Sigmoid colon (tissue), 7 donors: ENCODE measurements at regions of chr3 and their contacts with region 1.

Region 1: GRCh38 chr3:192409825-192410683 is 317.3 kb downstream of the FGF12 start:
- DNase-seq: no peak
- H3K4me3 ChIP-seq: peak overlapping the region; percentile 18 to 57 (median 49)
- H3K27ac ChIP-seq: peak overlapping the region; percentile 27 to 84 (median 49)
- H3K4me1 ChIP-seq: peaks cover 0 to 26% (median 17%) of the 10 kb centered on the region in 4 donors
- H3K27me3 ChIP-seq: peaks cover 9 to 36% (median 15%) of the 10 kb centered on the region in 3 donors
- CTCF ChIP-seq: no peak
- EP300 ChIP-seq: no peak
- POLR2A ChIP-seq: no peak

Region 2: GRCh38 chr3:192188218-192188835 is 221.7 kb before region 1 on chr3:
- intact Hi-C with region 1: loop called (anchors 10 kb)
- DNase-seq: no peak
- H3K4me3 ChIP-seq: no peak overlapping the region
- H3K27ac ChIP-seq: no peak overlapping the region
- H3K4me1 ChIP-seq: no peaks in the 10 kb centered on the region
- H3K27me3 ChIP-seq: no peaks in the 10 kb centered on the region
- CTCF ChIP-seq: peak in 1 of 4 experiments; percentile 41
- EP300 ChIP-seq: no peak
- POLR2A ChIP-seq: no peak